ENCODE measurements at regions of chr19 and their contacts with region 1.

Region 1: GRCh38 chr19:40609561-40610395 is 8.6 kb downstream of the LTBP4 start:
- DNase-seq: peak; percentile 92
- ATAC-seq: peak; percentile 54
- H3K4me3 Mint-ChIP-seq: peak overlapping the region; percentile 88
- H3K27ac Mint-ChIP-seq: peak overlapping the region; percentile 94
- H3K4me1 Mint-ChIP-seq: peaks cover 60% of the 10 kb centered on the region
- H3K27me3 Mint-ChIP-seq: no peaks in the 10 kb centered on the region
- CTCF ChIP-seq: no peak

Region 2: DNA sequence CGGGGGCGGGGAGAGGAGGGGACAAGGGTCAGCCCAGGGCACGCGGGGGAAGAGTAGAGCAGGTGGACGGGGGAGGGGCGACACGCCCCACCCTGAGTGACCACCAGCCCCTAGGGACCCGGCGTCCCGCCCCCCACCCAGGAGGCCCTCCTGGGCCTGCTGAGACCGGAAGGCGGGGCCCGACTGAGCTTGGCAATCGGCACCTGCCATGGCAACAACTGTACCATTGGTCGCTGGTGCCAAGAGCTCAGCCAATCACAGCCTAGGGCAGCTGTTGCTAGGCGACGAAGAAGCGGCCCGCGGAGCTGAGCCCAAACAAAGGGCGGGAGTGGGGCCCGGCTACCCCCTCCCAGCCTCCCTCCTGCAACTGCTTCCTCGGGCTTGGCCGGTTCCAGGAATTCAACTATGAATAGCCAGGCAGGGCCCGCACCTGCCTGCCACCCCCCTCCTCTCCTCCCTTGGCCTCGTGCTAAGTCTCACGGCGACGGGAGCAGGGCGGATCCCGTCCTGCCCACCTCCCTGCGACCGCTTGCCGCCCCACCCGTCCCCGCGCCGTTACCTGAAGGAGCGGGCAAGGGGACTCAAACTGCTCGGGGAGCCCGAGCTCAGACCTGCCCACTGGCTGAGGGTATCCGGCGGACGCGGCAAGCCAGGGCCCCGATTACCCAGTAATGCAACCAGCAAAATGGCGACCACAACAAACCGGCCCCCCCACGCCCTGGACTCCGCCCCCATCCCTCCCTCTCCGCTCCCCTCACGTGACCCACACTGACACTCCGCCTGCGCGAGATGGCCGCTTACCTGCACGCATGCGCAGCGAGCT is 776.1 kb before region 1 on chr19 and contains the start of gene DYRK1B:
- CTCF ChIA-PET with region 1: no interaction called
- POLR2A ChIA-PET with region 1: no interaction called
- intact Hi-C with region 1: loop called (anchors 5 kb)
- DNase-seq: peak; percentile 90
- ATAC-seq: peak; percentile 86
- H3K4me3 Mint-ChIP-seq: peak within 1 kb of the TSS; percentile 82
- H3K27ac Mint-ChIP-seq: peak within 1 kb of the TSS; percentile 87
- H3K4me1 Mint-ChIP-seq: peaks cover 33% of the 10 kb centered on the region
- H3K27me3 Mint-ChIP-seq: no peaks in the 10 kb centered on the region
- CTCF ChIP-seq: no peak
- total RNA-seq, gene DYRK1B: 16.9 and 17.2 TPM in 2 replicates

Region 3: GRCh38 chr19:40465557-40466150 is 144.1 kb before region 1 on chr19 and contains the start of gene BLVRB:
- CTCF ChIA-PET with region 1: interaction called, 3 read pairs
- POLR2A ChIA-PET with region 1: interaction called, 7 read pairs
- intact Hi-C with region 1: loop called (anchors 5 kb)
- DNase-seq: peak; percentile 99
- ATAC-seq: peak; percentile 89
- H3K4me3 Mint-ChIP-seq: peak within 1 kb of the TSS; percentile 81
- H3K27ac Mint-ChIP-seq: peak within 1 kb of the TSS; percentile 68
- H3K4me1 Mint-ChIP-seq: peaks cover 36% of the 10 kb centered on the region
- H3K27me3 Mint-ChIP-seq: peaks cover 14% of the 10 kb centered on the region
- CTCF ChIP-seq: no peak
- total RNA-seq, gene BLVRB: 12.3 and 14.6 TPM in 2 replicates

Region 4: DNA sequence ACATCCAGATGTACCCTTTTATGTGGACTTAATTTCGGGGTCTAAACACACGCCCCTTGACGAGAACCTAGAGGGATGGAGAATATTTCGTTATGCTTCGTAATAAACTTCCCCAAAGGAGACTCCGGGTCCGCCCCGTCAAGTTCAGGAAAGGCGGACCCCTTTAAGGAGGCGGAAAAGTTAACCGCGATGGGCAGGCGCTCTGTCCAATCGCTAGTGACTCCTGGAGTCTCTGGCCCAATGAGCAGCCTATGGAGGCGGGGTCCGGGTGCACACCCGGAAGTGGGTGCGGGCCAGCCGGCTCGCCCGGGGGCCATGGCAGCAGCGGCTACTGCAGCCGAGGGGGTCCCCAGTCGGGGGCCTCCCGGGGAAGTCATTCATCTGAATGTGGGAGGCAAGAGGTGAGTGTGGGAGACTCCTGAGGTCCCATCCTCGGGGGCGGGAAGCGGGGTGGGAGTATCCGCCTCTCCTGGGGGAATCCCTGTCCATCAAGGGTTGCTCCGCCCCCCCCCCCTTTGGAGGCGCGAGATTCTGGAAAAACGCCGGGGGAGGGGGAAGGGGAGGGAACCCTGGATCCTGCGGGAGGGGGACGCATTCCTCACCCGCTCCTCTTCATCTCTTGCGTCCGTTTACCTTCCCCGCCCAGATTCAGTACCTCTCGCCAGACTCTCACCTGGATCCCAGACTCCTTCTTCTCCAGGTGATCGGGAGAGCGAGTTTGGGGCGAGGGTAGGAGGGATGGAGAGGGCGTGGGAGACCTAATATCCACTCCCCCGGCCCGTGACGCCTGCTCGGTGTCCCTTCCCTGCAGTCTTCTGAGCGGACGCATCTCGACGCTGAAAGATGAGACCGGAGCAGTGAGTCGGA is 33.0 kb before region 1 on chr19 and contains the start of gene SHKBP1:
- CTCF ChIA-PET with region 1: interaction called, 3 read pairs
- POLR2A ChIA-PET with region 1: interaction called, 24 read pairs
- intact Hi-C with region 1: loop called (anchors 1 kb)
- DNase-seq: peak; percentile 89
- ATAC-seq: peak; percentile 94
- H3K4me3 Mint-ChIP-seq: peak within 1 kb of the TSS; percentile 88
- H3K27ac Mint-ChIP-seq: peak within 1 kb of the TSS; percentile 84
- H3K4me1 Mint-ChIP-seq: peaks cover 39% of the 10 kb centered on the region
- H3K27me3 Mint-ChIP-seq: no peaks in the 10 kb centered on the region
- CTCF ChIP-seq: no peak
- total RNA-seq, gene SHKBP1: 184 and 213 TPM in 2 replicates

Region 5: DNA sequence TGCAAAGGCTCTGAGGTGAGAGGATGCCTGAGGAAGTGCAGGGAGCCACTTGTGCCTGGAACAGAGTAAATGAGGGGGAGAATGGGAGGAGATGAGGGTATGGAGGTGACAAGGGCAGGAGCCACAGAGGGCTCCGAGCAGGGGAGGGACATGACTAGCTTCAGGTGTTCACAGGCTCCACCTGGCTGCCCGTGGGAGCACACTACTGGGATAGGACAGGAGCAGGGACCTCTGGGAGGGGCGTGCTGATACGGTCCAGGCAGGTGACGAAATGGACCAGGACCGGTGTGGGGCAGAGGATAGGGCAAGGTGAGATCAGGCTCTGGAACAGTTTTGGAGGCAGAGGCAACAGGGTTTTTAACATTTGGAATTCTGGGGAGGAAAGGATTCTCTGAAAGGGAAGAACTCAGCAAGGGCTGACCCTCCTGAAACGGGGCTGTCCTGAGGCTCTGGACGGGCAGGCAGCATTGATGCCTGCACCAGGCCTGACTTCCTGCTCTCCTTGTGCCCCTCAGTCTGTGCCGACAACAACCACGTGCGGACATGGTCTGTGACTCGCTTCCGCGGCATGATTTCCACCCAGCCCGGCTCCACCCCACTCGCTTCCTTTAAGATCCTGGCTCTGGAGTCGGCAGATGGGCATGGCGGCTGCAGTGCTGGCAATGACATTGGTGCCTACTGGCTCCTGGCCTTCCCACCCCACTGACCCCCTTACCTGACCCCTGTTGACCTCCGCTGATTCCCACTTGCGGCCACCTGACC is 21.5 kb before region 1 on chr19:
- CTCF ChIA-PET with region 1: no interaction called
- POLR2A ChIA-PET with region 1: no interaction called
- intact Hi-C with region 1: no loop called
- DNase-seq: no peak
- ATAC-seq: no peak
- H3K4me3 Mint-ChIP-seq: no peak overlapping the region
- H3K27ac Mint-ChIP-seq: no peak overlapping the region
- H3K4me1 Mint-ChIP-seq: peaks cover 10% of the 10 kb centered on the region
- H3K27me3 Mint-ChIP-seq: no peaks in the 10 kb centered on the region
- CTCF ChIP-seq: no peak

Region 6: GRCh38 chr19:40716655-40717324 is 107.0 kb after region 1 on chr19 and contains the starts of genes COQ8B and ITPKC:
- CTCF ChIA-PET with region 1: no interaction called
- POLR2A ChIA-PET with region 1: interaction called, 4 read pairs
- intact Hi-C with region 1: loop called (anchors 10 kb)
- DNase-seq: peak; percentile 100
- ATAC-seq: peak; percentile 70
- H3K4me3 Mint-ChIP-seq: peak within 1 kb of the TSS; percentile 90
- H3K27ac Mint-ChIP-seq: peak within 1 kb of the TSS; percentile 95
- H3K4me1 Mint-ChIP-seq: peaks cover 63% of the 10 kb centered on the region
- H3K27me3 Mint-ChIP-seq: no peaks in the 10 kb centered on the region
- CTCF ChIP-seq: no peak
- total RNA-seq, gene COQ8B: 34.4 and 38.5 TPM in 2 replicates
- total RNA-seq, gene ITPKC: 13.0 and 13.3 TPM in 2 replicates

Region 7: GRCh38 chr19:40798223-40798996 is 188.6 kb after region 1 on chr19:
- CTCF ChIA-PET with region 1: no interaction called
- POLR2A ChIA-PET with region 1: interaction called, 4 read pairs
- intact Hi-C with region 1: loop called (anchors 5 kb)
- DNase-seq: peak; percentile 57
- ATAC-seq: peak; percentile 38
- H3K4me3 Mint-ChIP-seq: peak overlapping the region; percentile 95
- H3K27ac Mint-ChIP-seq: peak overlapping the region; percentile 99
- H3K4me1 Mint-ChIP-seq: peaks cover 62% of the 10 kb centered on the region
- H3K27me3 Mint-ChIP-seq: no peaks in the 10 kb centered on the region
- CTCF ChIP-seq: no peak

Measured in activated B cell treated with CpG ODN at 0.5 μM for 24 hours (primary cell).